ENCODE measurements at regions of chr1 and their contacts with region 1.

Region 1: DNA sequence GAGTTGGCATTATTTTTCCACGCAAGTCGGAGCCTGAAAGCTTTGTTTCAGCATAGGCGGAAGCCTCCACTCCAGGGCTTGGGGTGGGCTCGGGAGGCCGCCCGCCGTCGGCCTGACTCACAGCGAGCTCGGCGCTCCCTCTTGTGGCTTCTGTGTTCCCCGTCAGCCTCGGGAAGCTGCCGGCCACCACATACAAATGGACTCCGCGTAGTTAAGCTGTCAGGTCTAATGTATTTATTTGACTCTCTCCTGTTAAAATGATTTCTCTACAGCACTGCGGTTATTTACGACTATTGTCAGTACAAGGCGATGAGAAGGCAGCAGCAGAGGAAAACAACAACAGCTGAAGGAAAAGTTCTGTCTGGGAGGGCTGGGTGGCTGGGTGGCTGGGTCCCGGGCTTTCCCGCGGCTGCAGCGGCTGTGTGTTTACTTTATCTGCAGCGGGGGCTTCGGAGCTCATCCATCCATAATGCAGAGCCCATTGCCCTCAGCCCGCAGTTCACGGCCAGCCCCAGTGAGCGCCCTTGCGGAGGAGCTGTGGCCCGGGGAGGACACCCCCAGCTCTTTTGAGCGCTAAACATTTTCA is 375.7 kb upstream of the CAMK1G start:
- DNase-seq: peak; percentile 66
- H3K27ac ChIP-seq: no peak overlapping the region
- CTCF ChIP-seq: peak; percentile 92

Region 2: GRCh38 chr1:208652296-208653160 is 555.3 kb before region 1 on chr1:
- CTCF ChIA-PET with region 1: interaction called, 11 read pairs
- POLR2A ChIA-PET with region 1: no interaction called
- DNase-seq: peak; percentile 70
- H3K27ac ChIP-seq: no peak overlapping the region
- CTCF ChIP-seq: peak; percentile 90

Region 3: DNA sequence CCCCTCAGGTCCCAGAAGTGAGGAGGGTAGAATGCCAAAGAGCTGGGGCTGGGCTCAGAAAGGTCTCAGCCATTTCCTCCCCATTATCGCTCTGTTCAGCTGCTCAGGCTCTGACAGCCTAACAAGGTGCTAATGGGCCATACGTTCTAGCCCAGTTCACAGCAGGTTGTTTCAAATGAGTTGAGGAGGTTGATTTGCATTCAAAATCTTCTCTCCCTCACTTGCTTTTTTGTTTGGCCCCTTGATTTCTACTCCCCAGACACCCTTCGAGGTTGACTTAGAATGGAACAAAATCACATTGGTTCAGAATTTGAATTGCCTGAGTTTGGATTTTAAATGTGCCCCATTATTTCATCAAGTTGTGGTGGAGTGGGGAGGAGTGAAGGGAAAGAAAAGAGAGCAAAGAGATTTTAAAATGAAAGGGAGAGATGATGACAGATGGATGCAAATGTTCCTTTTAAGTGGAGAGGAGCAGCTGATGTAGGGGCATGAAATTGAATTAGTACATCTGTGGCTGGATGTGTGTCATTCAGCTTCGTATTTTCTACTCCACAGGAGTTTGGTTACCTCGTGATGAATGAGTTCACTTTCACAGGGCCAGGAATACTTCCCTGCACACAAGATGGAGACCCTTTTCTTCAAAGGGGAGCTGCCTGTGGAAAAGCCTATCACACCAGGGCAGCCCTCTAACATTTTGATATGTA is 50.1 kb before region 1 on chr1:
- CTCF ChIA-PET with region 1: no interaction called
- POLR2A ChIA-PET with region 1: no interaction called
- DNase-seq: no peak
- H3K27ac ChIP-seq: no peak overlapping the region
- CTCF ChIP-seq: no peak

Region 4: GRCh38 chr1:209248649-209249279 is 41.0 kb after region 1 on chr1:
- CTCF ChIA-PET with region 1: interaction called, 19 read pairs
- POLR2A ChIA-PET with region 1: no interaction called
- DNase-seq: peak; percentile 78
- H3K27ac ChIP-seq: no peak overlapping the region
- CTCF ChIP-seq: peak; percentile 92

Region 5: DNA sequence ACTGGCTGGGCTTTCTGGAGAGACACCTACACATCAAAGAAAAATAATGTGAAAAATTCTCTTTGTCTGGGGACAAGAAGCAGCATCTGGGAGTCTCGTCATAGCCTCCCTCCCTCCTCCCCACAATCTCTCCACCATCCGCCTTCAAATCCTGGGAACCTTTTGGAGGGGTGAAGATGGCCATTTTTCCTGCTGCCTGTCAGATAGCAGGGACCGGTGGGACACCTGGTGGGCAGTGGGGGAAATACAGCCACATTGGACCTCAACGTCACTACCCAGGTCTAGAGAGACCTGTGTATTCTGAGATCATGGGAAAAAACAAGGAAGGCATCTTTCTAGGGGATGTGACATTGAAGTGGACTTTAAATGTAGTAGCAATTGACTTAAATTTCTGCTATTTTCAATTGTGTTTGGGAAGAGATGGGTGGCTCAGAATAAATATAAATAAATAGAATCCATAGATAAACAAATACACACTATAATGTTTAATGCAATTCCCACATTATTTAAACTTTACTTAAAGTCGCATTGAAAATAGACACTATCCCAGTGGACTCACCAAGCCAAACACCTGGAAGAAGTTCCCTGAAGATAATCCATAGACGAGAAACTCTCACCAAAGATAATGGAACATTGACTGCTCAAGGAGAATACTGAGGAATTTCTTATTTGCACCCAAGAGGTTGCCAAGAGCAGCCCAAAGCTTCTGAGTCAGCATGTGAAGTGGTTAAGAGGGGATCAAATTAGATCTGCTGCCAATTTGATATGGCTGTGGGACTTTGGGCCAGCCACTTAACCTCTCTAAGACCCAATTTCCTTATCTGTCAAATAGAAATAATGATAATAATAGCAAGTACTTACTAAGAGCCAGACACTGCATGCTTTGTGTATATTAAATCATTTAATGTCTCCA is 228.1 kb after region 1 on chr1:
- CTCF ChIA-PET with region 1: interaction called, 15 read pairs
- POLR2A ChIA-PET with region 1: no interaction called
- DNase-seq: peak; percentile 93
- H3K27ac ChIP-seq: peak overlapping the region; percentile 100
- CTCF ChIP-seq: peak; percentile 92